Activated CD8-positive, alpha-beta T cell treated with anti-CD3 and anti-CD28 coated beads, Interleukin-2, amount 10 ng/mL, durations not matched to agents 7 days and 5 days (primary cell): ENCODE measurements at regions of chr13 and their contacts with region 1.

Region 1: DNA sequence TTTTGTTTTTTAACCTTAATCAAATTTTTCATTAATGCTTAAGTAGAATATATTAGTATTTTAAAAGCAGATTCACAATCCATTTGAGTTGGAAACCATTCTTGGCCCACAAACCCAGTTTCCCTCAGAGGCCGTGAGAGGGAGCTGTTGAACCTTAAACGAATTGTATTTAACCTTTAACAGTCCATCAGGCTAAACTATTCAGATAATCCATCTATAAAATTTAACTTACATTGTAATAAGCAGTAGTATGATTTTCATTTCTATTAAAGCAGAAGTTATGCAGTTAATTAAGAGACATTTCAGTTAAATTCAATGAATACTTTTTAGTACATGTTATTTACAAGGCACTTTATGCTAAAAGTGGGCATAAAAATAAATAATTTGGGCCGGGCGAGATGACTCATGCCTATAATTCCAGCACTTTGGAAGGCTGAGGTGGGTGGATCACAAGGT is 123.1 kb upstream of the C1QTNF9B start:
- DNase-seq: peak; percentile 62
- ATAC-seq: no peak
- H3K4me3 Mint-ChIP-seq: no peak overlapping the region
- H3K27ac Mint-ChIP-seq: no peak overlapping the region
- H3K4me1 Mint-ChIP-seq: peaks cover 10% of the 10 kb centered on the region
- H3K27me3 Mint-ChIP-seq: no peaks in the 10 kb centered on the region

Region 2: DNA sequence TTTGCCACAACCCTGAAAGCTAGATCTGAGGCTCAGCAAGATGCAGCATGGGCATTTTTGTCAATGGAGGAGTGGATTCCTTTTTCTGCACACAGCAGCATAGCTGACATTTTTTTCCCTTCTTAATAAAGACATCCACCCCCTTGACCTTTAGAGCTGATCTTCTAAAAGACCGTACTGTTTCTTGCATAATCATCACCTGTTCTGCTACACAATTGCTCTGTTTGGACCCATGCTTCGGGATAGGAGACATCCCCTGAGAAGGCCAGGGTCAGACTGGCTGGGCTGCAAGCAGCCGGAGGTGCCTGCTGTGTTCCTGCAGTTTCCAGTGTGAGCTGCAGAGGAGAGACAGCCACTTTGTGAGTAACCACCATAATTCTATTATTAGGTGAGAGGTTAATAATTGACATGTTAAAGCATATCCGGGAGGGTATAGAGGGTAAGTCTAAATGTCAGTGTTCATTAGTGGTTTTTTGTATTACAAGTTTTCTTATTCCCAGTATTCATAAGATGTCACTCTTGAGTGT is 14.6 kb before region 1 on chr13:
- CTCF ChIA-PET with region 1: interaction called, 10 read pairs
- POLR2A ChIA-PET with region 1: no interaction called
- DNase-seq: no peak
- ATAC-seq: no peak
- H3K4me3 Mint-ChIP-seq: no peak overlapping the region
- H3K27ac Mint-ChIP-seq: no peak overlapping the region
- H3K4me1 Mint-ChIP-seq: no peaks in the 10 kb centered on the region
- H3K27me3 Mint-ChIP-seq: no peaks in the 10 kb centered on the region